OCI-LY7 (cell line): ENCODE measurements at regions of chr14 and their contacts with region 1.

Region 1: DNA sequence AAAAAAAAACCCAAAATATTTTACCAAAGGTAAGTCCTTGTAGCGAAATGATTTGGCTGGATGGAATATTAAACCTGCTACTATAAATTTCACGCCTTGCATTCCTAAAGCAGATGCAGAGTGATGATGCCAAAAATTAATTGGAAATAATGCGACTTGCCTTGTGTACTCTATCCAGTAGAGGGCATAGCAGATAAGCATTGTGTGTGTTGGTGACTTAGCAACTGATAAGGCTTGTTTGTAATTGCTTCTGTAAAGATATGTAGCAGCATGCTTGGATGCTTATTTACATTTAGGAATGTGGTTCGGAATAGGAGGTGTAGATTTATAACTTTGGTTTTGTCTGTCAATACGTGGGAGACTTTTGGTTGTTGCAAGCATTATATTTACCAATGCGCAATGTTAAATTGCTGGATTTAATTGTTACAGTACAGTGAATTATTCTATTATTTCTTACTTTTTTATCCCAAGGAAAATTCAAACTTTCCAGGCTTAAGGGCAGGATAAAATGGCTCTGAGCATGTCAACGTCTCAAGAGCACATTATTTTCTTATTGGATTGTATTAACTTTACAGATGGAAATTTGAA is 80.5 kb downstream of the TMEM260 start:
- DNase-seq: peak; percentile 40
- H3K4me3 ChIP-seq: no peak overlapping the region
- H3K27ac ChIP-seq: no peak overlapping the region
- H3K4me1 ChIP-seq: no peaks in the 10 kb centered on the region
- CTCF ChIP-seq: peak; percentile 84

Region 2: DNA sequence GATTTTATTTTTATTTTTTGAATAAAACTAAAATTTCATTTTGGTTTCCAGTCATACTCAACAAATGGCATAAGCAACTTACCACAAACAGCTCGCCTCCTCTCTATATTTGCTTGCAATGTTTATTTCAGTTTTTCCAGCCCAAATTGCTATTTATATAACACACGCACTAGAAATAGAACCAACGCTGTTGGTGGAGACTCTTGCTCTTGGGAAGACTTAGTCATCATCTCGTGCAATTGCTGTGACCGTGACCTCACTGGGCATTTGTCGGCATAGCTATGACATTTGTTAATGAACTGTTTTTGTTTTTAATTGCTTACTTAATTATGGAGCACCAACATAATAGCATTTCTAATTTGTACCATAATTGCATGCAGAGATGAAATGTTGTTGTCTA is 303.3 kb after region 1 on chr14:
- CTCF ChIA-PET with region 1: no interaction called
- POLR2A ChIA-PET with region 1: no interaction called
- intact Hi-C with region 1: no loop called
- DNase-seq: no peak
- H3K4me3 ChIP-seq: no peak overlapping the region
- H3K27ac ChIP-seq: no peak overlapping the region
- H3K4me1 ChIP-seq: no peaks in the 10 kb centered on the region
- CTCF ChIP-seq: no peak

Region 3: DNA sequence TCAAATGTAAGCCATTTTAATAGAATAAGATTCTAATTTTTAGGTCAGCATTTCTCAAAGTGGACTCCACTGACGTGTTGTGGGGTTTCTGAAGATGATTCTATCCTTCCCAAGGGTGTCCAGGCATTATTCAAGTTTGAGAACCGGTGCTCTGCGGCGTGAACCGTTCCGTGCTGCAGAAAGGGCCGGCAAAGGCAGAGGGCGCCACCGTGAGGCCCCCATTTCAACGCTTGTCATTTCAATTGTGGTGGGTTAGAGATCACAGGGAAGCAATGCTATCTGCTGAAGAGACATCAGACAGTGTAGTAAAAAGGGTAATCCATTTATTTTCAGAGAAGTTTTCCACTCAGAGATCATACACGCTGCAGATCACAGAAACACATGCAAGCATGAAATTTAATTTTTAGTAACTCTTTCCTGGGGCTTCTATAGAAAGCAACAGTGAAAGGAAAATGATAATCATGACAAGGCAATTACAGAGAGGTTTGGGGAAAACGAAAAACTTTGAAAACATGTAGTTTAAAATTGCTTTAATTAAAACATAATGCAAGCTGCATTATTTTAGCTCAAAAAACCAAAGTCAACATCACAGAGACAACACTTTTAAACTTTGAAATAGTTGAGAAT is 406.9 kb after region 1 on chr14:
- CTCF ChIA-PET with region 1: no interaction called
- POLR2A ChIA-PET with region 1: no interaction called
- intact Hi-C with region 1: loop called (anchors 10 kb)
- DNase-seq: peak; percentile 4
- H3K4me3 ChIP-seq: no peak overlapping the region
- H3K27ac ChIP-seq: no peak overlapping the region
- H3K4me1 ChIP-seq: no peaks in the 10 kb centered on the region
- CTCF ChIP-seq: peak; percentile 73